Sigmoid colon (tissue), 7 donors: ENCODE measurements at regions of chr21 and their contacts with region 1.

Region 1: DNA sequence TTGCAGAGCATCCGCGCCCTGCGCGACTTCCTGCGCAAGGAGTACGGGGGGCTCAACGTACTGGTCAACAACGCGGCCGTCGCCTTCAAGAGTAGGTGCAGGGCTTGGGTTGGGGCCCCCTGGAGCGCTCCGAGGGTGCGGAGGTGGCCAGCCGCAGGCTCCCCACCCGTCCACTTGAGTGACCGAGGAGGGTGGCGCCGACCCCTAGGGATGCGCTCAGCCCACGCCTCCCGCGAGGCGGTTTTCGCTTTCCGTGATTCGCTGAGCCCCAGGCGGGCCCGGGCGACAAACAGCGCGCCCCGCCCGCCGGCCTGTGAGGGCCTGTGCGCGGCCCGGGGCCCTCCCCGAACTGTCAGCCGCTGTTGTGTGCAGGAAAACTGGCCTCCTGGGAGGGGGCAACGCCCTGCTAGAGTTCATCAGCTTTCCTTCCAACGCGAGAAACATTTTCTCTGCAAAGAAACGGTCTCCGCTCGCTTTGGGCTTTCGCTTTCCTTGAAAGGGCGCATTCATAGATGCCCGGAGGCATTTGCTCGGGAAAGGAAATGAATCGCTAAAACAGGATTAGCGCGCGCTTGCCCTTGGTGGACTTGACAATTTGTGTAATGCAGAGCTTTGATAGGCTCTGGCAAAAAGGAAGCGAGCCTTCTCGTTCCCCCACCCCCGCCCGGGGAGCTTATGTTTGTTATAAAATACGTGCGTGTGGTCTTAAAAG is 668 bp downstream of the CBR3 start:
- DNase-seq: peak; percentile 88
- H3K4me3 ChIP-seq: peak overlapping the region; percentile 56 to 72 (median 62)
- H3K27ac ChIP-seq: peak overlapping the region; percentile 87 to 95 (median 90)
- H3K4me1 ChIP-seq: peaks cover 0 to 22% (median 18%) of the 10 kb centered on the region in 4 donors
- H3K27me3 ChIP-seq: no peaks in the 10 kb centered on the region
- CTCF ChIP-seq: no peak
- EP300 ChIP-seq: no peak
- POLR2A ChIP-seq: peak; percentile 37 to 62

Region 2: DNA sequence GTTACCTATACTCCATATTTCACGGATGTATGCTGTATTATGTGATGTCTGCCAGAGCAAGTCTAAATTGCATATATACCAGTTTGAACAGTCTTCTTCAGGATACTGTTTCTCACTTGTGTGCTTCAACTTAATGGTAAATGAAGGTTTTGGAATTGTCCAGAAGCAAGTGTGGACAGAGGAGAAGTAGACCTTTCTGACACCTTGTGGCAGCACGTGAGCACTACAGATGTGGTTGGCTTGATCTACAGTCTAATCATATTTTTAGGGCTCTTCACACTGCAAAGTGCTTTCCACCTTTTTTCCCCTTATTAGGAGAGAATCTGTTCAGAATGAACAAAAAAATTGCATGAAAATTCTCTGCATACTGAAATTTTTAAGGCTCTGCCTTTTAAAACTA is 195.4 kb after region 1 on chr21:
- intact Hi-C with region 1: loop called (anchors 5 kb)
- DNase-seq: no peak
- H3K4me3 ChIP-seq: no peak overlapping the region
- H3K27ac ChIP-seq: no peak overlapping the region
- H3K4me1 ChIP-seq: peaks cover 0 to 54% (median 45%) of the 10 kb centered on the region in 4 donors
- H3K27me3 ChIP-seq: no peaks in the 10 kb centered on the region
- CTCF ChIP-seq: peak; percentile 26 to 64 (median 62)
- EP300 ChIP-seq: no peak
- POLR2A ChIP-seq: no peak

Region 3: GRCh38 chr21:36385233-36386030 is 249.9 kb after region 1 on chr21 and contains the start of gene CHAF1B:
- intact Hi-C with region 1: loop called (anchors 5 kb)
- DNase-seq: peak; percentile 85
- H3K4me3 ChIP-seq: peak within 1 kb of the TSS; percentile 56 to 83 (median 64)
- H3K27ac ChIP-seq: peak within 1 kb of the TSS; percentile 46 to 68 (median 60)
- H3K4me1 ChIP-seq: peaks cover 0 to 15% (median 5%) of the 10 kb centered on the region in 4 donors
- H3K27me3 ChIP-seq: no peaks in the 10 kb centered on the region
- CTCF ChIP-seq: no peak
- EP300 ChIP-seq: no peak
- POLR2A ChIP-seq: no peak
- total RNA-seq, gene CHAF1B: 0.36 to 0.95 (median 0.61) TPM